ENCODE measurements at regions of chr12 and their contacts with region 1.

Region 1: GRCh38 chr12:6039894-6040568 is 84.4 kb downstream of the VWF start:
- DNase-seq: peak; percentile 48 to 57 (median 52)
- ATAC-seq: peak; percentile 87
- H3K4me3 ChIP-seq: no peak overlapping the region
- H3K27ac ChIP-seq: no peak overlapping the region
- H3K4me1 ChIP-seq: no peaks in the 10 kb centered on the region; a peak in 1 of 5 replicates
- H3K27me3 ChIP-seq: peaks cover 2 to 14% of the 10 kb centered on the region in 2 experiments; a peak in 3 of 5 replicates
- CTCF ChIP-seq: peak; percentile 68 to 85 (median 80)
- EP300 ChIP-seq: no peak
- POLR2A ChIP-seq: no peak
- RAD21 ChIP-seq: peak; percentile 45 to 74

Region 2: DNA sequence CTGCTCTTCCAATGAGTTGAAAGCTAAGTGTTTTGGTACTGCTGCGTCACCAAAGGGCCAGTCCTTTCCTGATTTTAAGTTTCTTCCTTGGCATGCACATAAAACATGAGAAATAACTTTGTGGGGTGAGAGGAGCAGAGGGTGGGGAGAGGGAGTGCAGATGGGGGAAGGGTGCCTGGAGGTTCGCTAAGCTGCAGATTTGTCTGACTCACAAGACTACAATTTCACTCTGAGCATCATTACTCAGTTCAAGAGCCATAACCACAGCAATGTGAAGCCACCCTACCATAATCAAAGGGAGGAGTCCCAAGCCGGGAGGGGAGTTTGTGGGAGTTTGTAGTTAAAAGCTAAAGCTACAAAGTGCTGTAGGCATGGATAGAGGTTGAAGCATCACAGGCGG is 231.1 kb before region 1 on chr12:
- CTCF ChIA-PET with region 1: no interaction called
- POLR2A ChIA-PET with region 1: no interaction called
- in situ Hi-C with region 1: no loop called
- intact Hi-C with region 1: no loop called
- DNase-seq: no peak
- ATAC-seq: no peak
- H3K4me3 ChIP-seq: no peak overlapping the region
- H3K27ac ChIP-seq: no peak overlapping the region
- H3K4me1 ChIP-seq: no peaks in the 10 kb centered on the region
- H3K27me3 ChIP-seq: peaks cover 3 to 18% of the 10 kb centered on the region in 2 experiments; a peak in 3 of 5 replicates
- CTCF ChIP-seq: no peak
- EP300 ChIP-seq: no peak
- POLR2A ChIP-seq: no peak
- RAD21 ChIP-seq: no peak

Region 3: GRCh38 chr12:5846950-5847349 is 193.1 kb before region 1 on chr12:
- CTCF ChIA-PET with region 1: no interaction called
- POLR2A ChIA-PET with region 1: no interaction called
- in situ Hi-C with region 1: no loop called
- intact Hi-C with region 1: no loop called
- DNase-seq: no peak
- ATAC-seq: no peak
- H3K4me3 ChIP-seq: no peak overlapping the region
- H3K27ac ChIP-seq: no peak overlapping the region
- H3K4me1 ChIP-seq: no peaks in the 10 kb centered on the region
- H3K27me3 ChIP-seq: no peaks in the 10 kb centered on the region
- CTCF ChIP-seq: no peak
- EP300 ChIP-seq: no peak
- POLR2A ChIP-seq: no peak
- RAD21 ChIP-seq: no peak

Region 4: DNA sequence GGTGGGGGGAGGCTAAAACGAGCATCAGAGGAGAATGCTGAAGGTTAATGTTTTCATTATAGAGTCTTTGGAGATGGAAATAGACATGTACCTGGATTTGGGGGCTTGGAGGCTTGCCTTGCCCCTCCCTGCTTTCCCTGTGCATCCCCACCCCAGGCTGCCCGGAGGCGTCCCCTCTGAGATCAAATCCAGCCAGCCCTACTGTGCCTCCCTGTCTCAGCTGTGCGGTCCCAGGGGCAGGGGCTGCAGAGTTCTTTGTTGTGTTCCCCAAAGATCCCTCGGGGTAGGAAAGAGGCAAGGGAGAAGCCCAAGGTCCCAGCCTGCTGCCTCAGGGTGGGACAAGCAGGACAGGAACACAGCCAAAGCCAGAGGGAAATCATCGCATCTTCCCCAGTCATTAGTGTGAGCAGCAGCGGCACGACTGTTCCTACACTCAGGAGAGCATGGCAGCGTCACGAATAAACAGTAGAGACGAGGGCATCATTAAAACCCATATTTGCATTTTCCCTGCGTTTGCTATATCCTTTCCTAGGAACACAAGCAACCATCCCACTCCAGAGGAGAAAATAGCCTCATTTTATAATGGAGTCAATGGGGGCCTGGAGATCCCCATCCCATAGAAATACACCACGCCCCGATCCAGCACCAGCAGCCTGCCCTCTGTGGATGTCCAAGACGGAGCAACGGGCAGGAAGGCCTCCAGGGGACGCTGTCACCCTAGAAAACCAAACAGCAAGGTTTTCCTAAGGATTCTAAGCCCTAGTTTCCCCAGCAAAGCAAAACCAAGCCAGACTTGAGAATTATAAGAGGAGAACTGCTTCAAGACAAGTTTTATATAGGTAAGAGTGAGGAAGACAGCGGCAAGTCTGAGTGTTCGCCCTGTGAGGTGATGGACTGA is 127.3 kb before region 1 on chr12:
- CTCF ChIA-PET with region 1: interaction called, 7 read pairs
- POLR2A ChIA-PET with region 1: no interaction called
- in situ Hi-C with region 1: no loop called
- intact Hi-C with region 1: loop called (anchors 2 kb)
- DNase-seq: peak; percentile 16 to 30 (median 24)
- ATAC-seq: peak; percentile 70
- H3K4me3 ChIP-seq: no peak overlapping the region
- H3K27ac ChIP-seq: no peak overlapping the region
- H3K4me1 ChIP-seq: no peaks in the 10 kb centered on the region
- H3K27me3 ChIP-seq: peaks cover 0 to 19% of the 10 kb centered on the region in 2 experiments; a peak in 2 of 5 replicates
- CTCF ChIP-seq: peak; percentile 62 to 71 (median 68)
- EP300 ChIP-seq: no peak
- POLR2A ChIP-seq: no peak
- RAD21 ChIP-seq: no peak; a peak in 1 of 4 replicates

Region 5: GRCh38 chr12:5965950-5966383 is 74.1 kb before region 1 on chr12:
- CTCF ChIA-PET with region 1: interaction called, 10 read pairs
- POLR2A ChIA-PET with region 1: no interaction called
- in situ Hi-C with region 1: no loop called
- intact Hi-C with region 1: no loop called
- DNase-seq: peak; percentile 43 to 53 (median 51)
- ATAC-seq: peak; percentile 94
- H3K4me3 ChIP-seq: no peak overlapping the region
- H3K27ac ChIP-seq: no peak overlapping the region
- H3K4me1 ChIP-seq: no peaks in the 10 kb centered on the region
- H3K27me3 ChIP-seq: peaks cover 0 to 16% of the 10 kb centered on the region in 2 experiments; a peak in 2 of 5 replicates
- CTCF ChIP-seq: peak; percentile 64 to 69 (median 68)
- EP300 ChIP-seq: no peak
- POLR2A ChIP-seq: no peak
- RAD21 ChIP-seq: peak in 1 of 2 experiments; percentile 26; a peak in 2 of 4 replicates

Region 6: DNA sequence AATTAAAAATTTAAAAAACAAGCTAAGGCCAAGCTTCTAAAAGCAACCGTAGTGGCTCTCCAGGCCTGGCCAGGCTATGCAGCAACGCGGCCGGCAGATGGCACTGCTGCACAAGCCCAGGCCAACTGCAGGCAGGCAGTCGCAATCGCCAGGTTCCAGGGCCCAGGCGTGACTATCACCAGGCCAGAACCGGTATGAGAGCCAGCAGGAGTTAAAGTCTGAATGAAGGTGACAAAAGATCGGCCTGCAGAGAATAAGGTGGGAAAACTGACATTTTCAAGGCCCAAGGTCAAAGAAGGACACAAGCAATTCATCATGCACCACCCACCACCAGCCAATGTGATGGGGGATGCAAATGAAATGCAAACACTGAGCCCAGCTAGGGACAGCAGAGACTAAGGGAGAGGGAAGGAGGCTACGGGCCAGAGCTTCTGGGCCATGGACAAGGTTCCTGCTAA is 51.3 kb before region 1 on chr12:
- CTCF ChIA-PET with region 1: interaction called, 54 read pairs
- POLR2A ChIA-PET with region 1: interaction called, 3 read pairs
- in situ Hi-C with region 1: loop called (anchors 5 kb)
- intact Hi-C with region 1: loop called (anchors 1 kb)
- DNase-seq: peak; percentile 56 to 65 (median 62)
- ATAC-seq: peak; percentile 97
- H3K4me3 ChIP-seq: no peak overlapping the region
- H3K27ac ChIP-seq: no peak overlapping the region
- H3K4me1 ChIP-seq: no peaks in the 10 kb centered on the region
- H3K27me3 ChIP-seq: peaks cover 0 to under 1% of the 10 kb centered on the region in 2 experiments; a peak in 1 of 5 replicates
- CTCF ChIP-seq: peak; percentile 88 to 95 (median 91)
- EP300 ChIP-seq: no peak
- POLR2A ChIP-seq: no peak
- RAD21 ChIP-seq: peak; percentile 61 to 85

Measured in K562 (cell line).